ENCODE measurements at regions of chr3 and their contacts with region 1.

Region 1: GRCh38 chr3:104367000-104367399 is 999.7 kb upstream of the ALCAM start:
- DNase-seq: peak in 1 of 2 donors; percentile 18
- ATAC-seq: peak in 7 of 8 donors; percentile 61 to 91 (median 79)
- H3K4me3 ChIP-seq: no peak overlapping the region
- H3K27ac ChIP-seq: peak overlapping the region in 1 of 10 donors; percentile 23
- H3K4me1 ChIP-seq: peaks cover 0 to 6% (median 0%) of the 10 kb centered on the region in 9 donors
- H3K27me3 ChIP-seq: no peaks in the 10 kb centered on the region
- CTCF ChIP-seq: no peak

Region 2: GRCh38 chr3:106299300-106300098 is 1932.5 kb after region 1 on chr3:
- intact Hi-C with region 1: loop called in 1 of 10 experiments (anchors 5 kb)
- DNase-seq: no peak
- ATAC-seq: peak in 2 of 8 donors; percentile 34 to 42
- H3K4me3 ChIP-seq: no peak overlapping the region
- H3K27ac ChIP-seq: no peak overlapping the region
- H3K4me1 ChIP-seq: peaks cover 0 to 6% (median 0%) of the 10 kb centered on the region in 9 donors
- H3K27me3 ChIP-seq: no peaks in the 10 kb centered on the region
- CTCF ChIP-seq: no peak